ENCODE measurements at regions of chr12 and their contacts with region 1.

Region 1: DNA sequence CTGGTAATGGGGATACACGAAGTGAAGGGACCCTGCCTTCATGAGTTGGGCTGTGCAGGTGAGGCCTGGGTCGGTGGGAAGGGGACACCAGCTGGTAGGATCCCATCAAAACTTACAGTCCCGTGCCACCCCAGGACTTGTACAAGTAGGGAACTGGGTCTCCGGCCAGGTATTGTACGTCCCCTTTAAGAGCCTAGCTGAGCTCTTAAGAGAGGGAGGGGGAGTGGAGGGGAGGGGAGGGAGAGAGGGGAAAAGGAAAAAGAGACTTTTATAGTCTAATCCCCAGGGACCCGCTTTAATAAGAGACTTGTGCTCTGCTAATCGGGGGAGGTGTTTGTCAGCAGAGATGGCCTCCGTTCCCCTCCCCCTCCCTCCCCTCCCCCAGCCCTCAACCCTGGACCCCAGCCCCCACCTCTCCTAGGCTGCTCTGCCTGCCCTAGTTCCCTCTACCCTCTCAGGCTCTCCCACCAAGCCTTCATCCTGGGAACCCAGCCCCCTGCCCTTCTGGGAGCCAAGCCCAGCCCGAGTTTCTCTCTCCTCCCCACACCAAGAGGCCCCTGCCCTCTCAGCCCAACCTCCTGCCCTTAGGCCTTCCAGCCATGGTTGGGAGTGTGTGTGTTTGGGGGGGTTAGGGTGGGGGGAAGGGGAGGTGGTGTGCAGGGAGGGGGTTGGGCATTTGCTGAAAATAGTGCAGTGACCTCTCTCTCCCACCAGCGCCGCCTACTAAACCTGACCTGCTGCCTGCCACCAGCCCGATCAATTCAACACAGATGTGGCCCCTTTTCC is 2.6 kb downstream of the GDF11 start:
- DNase-seq: peak; percentile 97
- H3K4me3 ChIP-seq: peak overlapping the region; percentile 70
- H3K27ac ChIP-seq: peak overlapping the region; percentile 80
- H3K4me1 ChIP-seq: peaks cover 9% of the 10 kb centered on the region
- H3K27me3 ChIP-seq: no peaks in the 10 kb centered on the region
- CTCF ChIP-seq: no peak

Region 2: DNA sequence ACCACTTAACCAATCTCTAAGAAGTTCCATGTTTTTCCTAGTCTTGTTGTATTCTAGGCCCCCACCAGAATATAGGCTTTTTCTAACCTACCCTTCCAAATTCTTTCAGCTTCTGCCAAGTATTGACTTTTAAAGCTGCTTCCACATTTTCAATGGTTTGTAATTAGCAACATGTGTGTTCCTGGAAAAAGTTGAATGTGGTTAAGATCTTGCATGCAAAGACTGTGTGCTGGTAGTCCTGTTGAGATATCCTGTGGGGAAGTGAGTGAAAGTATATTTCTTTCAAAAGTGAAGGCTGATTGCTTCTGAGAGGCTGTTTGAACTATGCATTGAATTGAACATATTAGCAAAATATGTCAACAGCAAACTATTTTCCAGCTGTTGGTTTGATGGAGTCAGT is 196.8 kb before region 1 on chr12:
- CTCF ChIA-PET with region 1: no interaction called
- POLR2A ChIA-PET with region 1: no interaction called
- intact Hi-C with region 1: no loop called
- DNase-seq: no peak
- H3K4me3 ChIP-seq: no peak overlapping the region
- H3K27ac ChIP-seq: no peak overlapping the region
- H3K4me1 ChIP-seq: no peaks in the 10 kb centered on the region
- H3K27me3 ChIP-seq: peaks cover 25% of the 10 kb centered on the region
- CTCF ChIP-seq: no peak

Region 3: GRCh38 chr12:55789893-55790292 is 44.3 kb after region 1 on chr12:
- CTCF ChIA-PET with region 1: no interaction called
- POLR2A ChIA-PET with region 1: no interaction called
- intact Hi-C with region 1: loop called (anchors 5 kb)
- DNase-seq: no peak
- H3K4me3 ChIP-seq: no peak overlapping the region
- H3K27ac ChIP-seq: no peak overlapping the region
- H3K4me1 ChIP-seq: no peaks in the 10 kb centered on the region
- H3K27me3 ChIP-seq: no peaks in the 10 kb centered on the region
- CTCF ChIP-seq: no peak

Region 4: GRCh38 chr12:55797068-55797467 is 51.5 kb after region 1 on chr12:
- CTCF ChIA-PET with region 1: interaction called, 7 read pairs
- POLR2A ChIA-PET with region 1: interaction called, 11 read pairs
- intact Hi-C with region 1: loop called (anchors 5 kb)
- DNase-seq: peak; percentile 68
- H3K4me3 ChIP-seq: no peak overlapping the region
- H3K27ac ChIP-seq: no peak overlapping the region
- H3K4me1 ChIP-seq: peaks cover 3% of the 10 kb centered on the region
- H3K27me3 ChIP-seq: no peaks in the 10 kb centered on the region
- CTCF ChIP-seq: peak; percentile 65

Region 5: DNA sequence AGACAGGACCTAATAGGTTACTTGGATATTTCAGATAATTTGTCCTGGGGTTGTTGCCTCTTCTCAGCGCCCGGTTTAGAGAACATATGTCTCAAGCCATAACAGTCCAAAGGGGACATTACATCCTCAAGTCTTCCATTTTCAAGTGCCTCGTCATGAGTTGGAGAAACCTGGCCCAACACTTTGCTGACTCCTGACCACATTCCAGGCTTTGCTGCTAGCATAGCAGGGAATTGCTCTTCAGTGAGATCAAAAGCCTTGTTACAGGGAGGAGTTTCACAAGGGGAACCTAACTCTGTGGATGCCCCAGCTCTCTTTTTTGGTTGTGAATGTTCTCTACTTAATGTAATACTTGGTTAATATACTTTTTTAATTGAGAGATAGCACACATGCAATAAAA is 105.3 kb after region 1 on chr12:
- CTCF ChIA-PET with region 1: no interaction called
- POLR2A ChIA-PET with region 1: no interaction called
- intact Hi-C with region 1: no loop called
- DNase-seq: no peak
- H3K4me3 ChIP-seq: no peak overlapping the region
- H3K27ac ChIP-seq: no peak overlapping the region
- H3K4me1 ChIP-seq: peaks cover 12% of the 10 kb centered on the region
- H3K27me3 ChIP-seq: no peaks in the 10 kb centered on the region
- CTCF ChIP-seq: no peak

Region 6: GRCh38 chr12:55875704-55876467 is 130.3 kb after region 1 on chr12:
- CTCF ChIA-PET with region 1: no interaction called
- POLR2A ChIA-PET with region 1: no interaction called
- intact Hi-C with region 1: no loop called
- DNase-seq: no peak
- H3K4me3 ChIP-seq: no peak overlapping the region
- H3K27ac ChIP-seq: no peak overlapping the region
- H3K4me1 ChIP-seq: no peaks in the 10 kb centered on the region
- H3K27me3 ChIP-seq: no peaks in the 10 kb centered on the region
- CTCF ChIP-seq: no peak

Region 7: GRCh38 chr12:55973598-55974307 is 228.2 kb after region 1 on chr12 and contains the start of gene RAB5B:
- CTCF ChIA-PET with region 1: interaction called, 12 read pairs
- POLR2A ChIA-PET with region 1: no interaction called
- intact Hi-C with region 1: no loop called
- DNase-seq: peak; percentile 100
- H3K4me3 ChIP-seq: peak within 1 kb of the TSS; percentile 92
- H3K27ac ChIP-seq: peak within 1 kb of the TSS; percentile 81
- H3K4me1 ChIP-seq: peaks cover 8% of the 10 kb centered on the region
- H3K27me3 ChIP-seq: no peaks in the 10 kb centered on the region
- CTCF ChIP-seq: no peak
- total RNA-seq, gene RAB5B: 73.9 and 78.1 TPM in 2 replicates

Region 8: GRCh38 chr12:57223191-57224165 is 1477.9 kb after region 1 on chr12:
- CTCF ChIA-PET with region 1: no interaction called
- POLR2A ChIA-PET with region 1: interaction called, 12 read pairs
- intact Hi-C with region 1: no loop called
- DNase-seq: no peak
- H3K4me3 ChIP-seq: no peak overlapping the region
- H3K27ac ChIP-seq: no peak overlapping the region
- H3K4me1 ChIP-seq: peaks cover 36% of the 10 kb centered on the region
- H3K27me3 ChIP-seq: no peaks in the 10 kb centered on the region
- CTCF ChIP-seq: no peak

Measured in A673 (cell line).